ENCODE measurements at regions of chr14 and their contacts with region 1.

Region 1: DNA sequence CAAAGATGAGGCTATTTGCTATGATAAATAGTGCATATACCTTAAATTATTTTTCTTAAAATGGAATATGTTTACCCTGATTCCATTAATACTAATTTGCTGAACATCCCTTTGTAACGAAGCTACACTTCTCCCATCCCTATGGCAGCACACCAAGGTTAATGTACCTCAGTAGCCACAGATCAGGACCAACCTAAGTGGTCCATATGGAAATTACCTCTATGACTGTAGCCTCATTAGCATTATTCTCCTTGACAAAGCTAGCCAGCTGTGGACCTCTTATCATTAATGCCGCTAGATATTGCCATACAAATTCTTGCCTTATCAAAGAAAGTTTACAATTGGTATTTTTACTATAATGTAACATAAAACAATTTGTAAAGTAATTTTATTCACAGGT is 76.9 kb upstream of the GARIN2 start:
- DNase-seq: no peak
- H3K4me3 ChIP-seq: no peak overlapping the region
- CTCF ChIP-seq: no peak

Region 2: DNA sequence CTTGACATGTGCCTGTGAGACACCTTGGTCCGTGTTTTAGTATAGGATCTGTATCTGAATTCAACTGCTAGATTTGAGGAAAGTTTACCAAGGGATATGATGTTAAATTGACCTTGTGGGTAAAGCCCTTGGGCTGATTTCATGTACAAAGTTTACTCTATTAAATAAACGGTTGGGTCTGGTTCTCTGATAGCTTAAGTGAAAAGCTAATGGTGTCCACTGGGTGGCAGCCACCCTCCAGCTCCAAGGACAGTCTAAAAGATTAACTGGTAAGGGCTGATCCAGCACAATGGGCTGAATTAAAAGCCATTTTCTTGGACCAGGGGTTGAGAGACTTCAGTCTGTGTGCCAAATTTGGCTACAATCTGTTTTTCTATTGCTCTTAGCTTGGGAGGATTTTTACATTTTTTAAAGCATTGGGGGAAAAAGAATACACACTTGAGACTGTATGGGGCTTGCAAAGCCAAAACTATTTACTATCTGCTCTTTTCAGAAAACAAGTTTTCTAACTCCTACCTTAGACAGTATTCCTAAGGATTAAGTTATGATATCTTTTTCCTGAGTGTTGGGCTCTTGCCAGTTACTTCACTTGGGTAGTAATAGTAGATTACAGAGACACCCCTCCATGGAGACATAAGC is 487.9 kb before region 1 on chr14:
- CTCF ChIA-PET with region 1: interaction called, 22 read pairs
- POLR2A ChIA-PET with region 1: no interaction called
- DNase-seq: no peak
- H3K4me3 ChIP-seq: no peak overlapping the region
- CTCF ChIP-seq: peak; percentile 65